ENCODE measurements at regions of chr4 and their contacts with region 1.

Region 1: GRCh38 chr4:166091912-166092510 is 219.0 kb downstream of the TLL1 start:
- DNase-seq: peak in 2 of 5 donors; percentile 48 to 60
- H3K4me3 ChIP-seq: no peak overlapping the region
- H3K27ac ChIP-seq: no peak overlapping the region
- H3K4me1 ChIP-seq: no peaks in the 10 kb centered on the region
- H3K27me3 ChIP-seq: no peaks in the 10 kb centered on the region
- CTCF ChIP-seq: peak; percentile 58

Region 2: DNA sequence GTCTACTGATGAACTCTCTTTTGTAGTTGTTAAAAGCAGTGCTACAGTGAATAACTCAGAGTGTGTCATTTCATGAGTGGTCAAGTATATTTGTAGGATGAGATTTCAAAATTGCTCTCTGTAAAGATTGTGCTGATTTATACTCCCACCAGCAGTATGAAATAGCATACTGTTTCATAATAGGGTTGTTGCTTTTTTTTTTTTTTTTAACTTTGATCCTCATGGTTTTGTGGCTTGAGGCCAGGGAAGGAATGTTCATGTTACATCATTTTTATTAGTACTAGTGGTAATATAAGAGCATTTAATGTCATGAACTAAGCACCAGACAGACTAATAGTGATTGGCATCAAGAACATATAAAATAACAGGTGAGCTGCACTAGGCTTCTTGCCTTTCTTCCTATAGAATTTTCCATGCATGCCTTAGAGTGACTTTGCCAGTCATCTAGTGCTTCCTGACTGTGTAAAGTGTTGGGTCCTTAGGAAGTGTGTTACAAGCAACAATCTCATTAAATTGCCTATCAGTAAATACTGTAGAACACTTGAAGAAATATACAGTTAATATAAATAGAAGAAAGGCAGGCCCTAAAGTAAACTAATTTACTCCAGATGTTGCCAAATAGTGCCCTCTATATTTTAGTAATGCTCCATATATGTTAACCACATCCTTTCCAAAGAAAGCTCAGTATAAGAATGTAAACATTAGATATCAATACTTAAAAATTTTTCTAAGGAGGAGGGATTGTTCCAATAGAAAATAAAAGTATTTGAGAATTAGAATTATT is 803.2 kb before region 1 on chr4:
- intact Hi-C with region 1: no loop called
- DNase-seq: no peak
- H3K4me3 ChIP-seq: no peak overlapping the region
- H3K27ac ChIP-seq: no peak overlapping the region
- H3K4me1 ChIP-seq: no peaks in the 10 kb centered on the region
- H3K27me3 ChIP-seq: no peaks in the 10 kb centered on the region
- CTCF ChIP-seq: no peak

Region 3: DNA sequence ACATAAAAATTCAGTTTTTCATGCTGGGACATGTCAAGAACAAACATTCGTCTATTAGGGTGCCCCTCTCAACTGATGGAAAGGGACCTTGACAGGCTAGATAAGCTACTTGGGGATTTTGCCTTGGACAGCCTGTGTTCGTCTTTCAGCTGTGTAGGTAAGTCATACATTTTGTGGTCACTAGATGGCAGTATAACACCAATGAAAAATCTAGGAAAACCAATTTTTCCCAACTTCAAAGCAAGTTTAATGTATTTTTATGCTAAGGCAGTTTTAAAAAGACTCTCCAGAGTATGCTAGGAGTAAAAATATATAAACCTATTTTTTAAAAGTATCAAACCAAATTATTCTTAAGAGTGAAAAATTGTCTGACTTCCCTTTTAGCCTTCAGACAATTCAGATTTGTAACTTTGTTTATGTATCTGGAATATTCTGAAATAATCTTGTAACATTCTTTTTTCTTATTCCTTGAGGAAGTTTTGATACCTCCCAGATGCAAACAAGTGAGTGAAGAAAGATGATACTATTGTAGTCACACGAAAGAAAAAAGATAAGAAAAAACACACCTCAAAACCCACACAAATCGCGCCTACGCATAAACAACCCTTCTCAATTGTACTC is 554.9 kb before region 1 on chr4:
- intact Hi-C with region 1: loop called (anchors 10 kb)
- DNase-seq: peak in 2 of 5 donors; percentile 68 to 71
- H3K4me3 ChIP-seq: no peak overlapping the region
- H3K27ac ChIP-seq: no peak overlapping the region
- H3K4me1 ChIP-seq: no peaks in the 10 kb centered on the region
- H3K27me3 ChIP-seq: no peaks in the 10 kb centered on the region
- CTCF ChIP-seq: peak; percentile 74

Measured in kidney (tissue), 22 donors.